ENCODE measurements at regions of chr3 and their contacts with region 1.

Region 1: GRCh38 chr3:4956738-4957137 is 22.5 kb upstream of the BHLHE40 start:
- DNase-seq: no peak
- ATAC-seq: no peak
- H3K4me3 Mint-ChIP-seq: no peak overlapping the region
- H3K27ac Mint-ChIP-seq: no peak overlapping the region
- H3K4me1 Mint-ChIP-seq: peaks cover 12% of the 10 kb centered on the region; the same call in 1 of the 2 replicates
- H3K27me3 Mint-ChIP-seq: peaks cover 3% of the 10 kb centered on the region; the same call in 1 of the 2 replicates
- CTCF ChIP-seq: no peak

Region 2: GRCh38 chr3:4752201-4753072 is 204.3 kb before region 1 on chr3:
- CTCF ChIA-PET with region 1: no interaction called
- POLR2A ChIA-PET with region 1: no interaction called
- DNase-seq: no peak
- ATAC-seq: no peak
- H3K4me3 Mint-ChIP-seq: no peak overlapping the region
- H3K27ac Mint-ChIP-seq: no peak overlapping the region
- H3K4me1 Mint-ChIP-seq: peaks cover 20% of the 10 kb centered on the region
- H3K27me3 Mint-ChIP-seq: no peaks in the 10 kb centered on the region
- CTCF ChIP-seq: no peak

Region 3: DNA sequence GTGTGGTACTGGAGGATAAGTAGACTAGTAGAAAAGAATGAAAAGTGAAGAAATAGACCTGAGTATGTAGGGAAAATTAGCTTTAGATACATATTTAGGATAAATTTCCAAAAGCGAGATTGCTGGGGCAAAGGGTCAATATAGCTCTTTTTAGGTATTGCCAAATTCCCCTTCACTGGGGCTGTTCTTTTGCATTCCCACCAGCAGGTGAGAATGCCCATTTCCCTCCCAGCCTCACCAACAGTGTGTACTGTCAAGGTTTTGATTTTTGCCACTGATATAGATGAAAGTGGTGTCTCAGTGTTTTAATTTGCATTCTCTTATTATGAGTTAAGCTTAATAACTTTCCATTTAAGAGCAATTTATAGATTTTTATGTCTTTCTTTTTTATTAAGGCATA is 13.2 kb before region 1 on chr3:
- CTCF ChIA-PET with region 1: interaction called, 13 read pairs
- POLR2A ChIA-PET with region 1: no interaction called
- DNase-seq: peak; percentile 23
- ATAC-seq: peak; percentile 87
- H3K4me3 Mint-ChIP-seq: no peak overlapping the region
- H3K27ac Mint-ChIP-seq: no peak overlapping the region
- H3K4me1 Mint-ChIP-seq: no peaks in the 10 kb centered on the region
- H3K27me3 Mint-ChIP-seq: no peaks in the 10 kb centered on the region
- CTCF ChIP-seq: 0 out of 2 replicates have a peak, but pooled peaks have one; percentile 16

Region 4: GRCh38 chr3:5041315-5041714 is 84.6 kb after region 1 on chr3:
- CTCF ChIA-PET with region 1: no interaction called
- POLR2A ChIA-PET with region 1: no interaction called
- DNase-seq: no peak
- ATAC-seq: peak; percentile 48
- H3K4me3 Mint-ChIP-seq: no peak overlapping the region
- H3K27ac Mint-ChIP-seq: no peak overlapping the region
- H3K4me1 Mint-ChIP-seq: no peaks in the 10 kb centered on the region
- H3K27me3 Mint-ChIP-seq: no peaks in the 10 kb centered on the region
- CTCF ChIP-seq: no peak

Measured in WTC11 (cell line).